ENCODE measurements at regions of chr1 and their contacts with region 1.

Region 1: GRCh38 chr1:113072757-113073478 is at the start of gene LRIG2:
- DNase-seq: peak; percentile 95 to 99 (median 96)
- H3K4me3 ChIP-seq: peak within 1 kb of the TSS; percentile 85 to 95
- H3K4me3 Mint-ChIP-seq: peak within 1 kb of the TSS; percentile 97 to 99 (median 98)
- H3K27ac ChIP-seq: peak within 1 kb of the TSS; percentile 80
- H3K27ac Mint-ChIP-seq: peak within 1 kb of the TSS; percentile 95 to 99 (median 97)
- H3K4me1 ChIP-seq: peaks cover 35% of the 10 kb centered on the region
- H3K4me1 Mint-ChIP-seq: peaks cover 15 to 54% (median 29%) of the 10 kb centered on the region in 4 donors
- H3K27me3 ChIP-seq: no peaks in the 10 kb centered on the region
- H3K27me3 Mint-ChIP-seq: peaks cover 0 to 1% of the 10 kb centered on the region in 2 donors
- total RNA-seq, gene LRIG2: 24.2 to 27.9 TPM

Region 2: GRCh38 chr1:112619520-112620376 is 453.2 kb before region 1 on chr1 and contains the start of gene CAPZA1:
- CTCF ChIA-PET with region 1: no interaction called
- POLR2A ChIA-PET with region 1: interaction called, 5 read pairs
- intact Hi-C with region 1: loop called (anchors 2 kb)
- DNase-seq: peak; percentile 92 to 94 (median 94)
- H3K4me3 ChIP-seq: peak within 1 kb of the TSS; percentile 83 to 98
- H3K4me3 Mint-ChIP-seq: peak within 1 kb of the TSS; percentile 94 to 100 (median 99)
- H3K27ac ChIP-seq: peak within 1 kb of the TSS; percentile 100
- H3K27ac Mint-ChIP-seq: peak within 1 kb of the TSS; percentile 96 to 100 (median 100)
- H3K4me1 ChIP-seq: peaks cover 55% of the 10 kb centered on the region
- H3K4me1 Mint-ChIP-seq: peaks cover 27 to 71% (median 40%) of the 10 kb centered on the region in 4 donors
- H3K27me3 ChIP-seq: no peaks in the 10 kb centered on the region
- H3K27me3 Mint-ChIP-seq: no peaks in the 10 kb centered on the region
- total RNA-seq, gene CAPZA1: 149 to 157 TPM

Region 3: GRCh38 chr1:112882271-112882744 is 190.6 kb before region 1 on chr1:
- CTCF ChIA-PET with region 1: interaction called, 97 read pairs
- POLR2A ChIA-PET with region 1: no interaction called
- intact Hi-C with region 1: loop called (anchors 2 kb)
- DNase-seq: no peak
- H3K4me3 ChIP-seq: no peak overlapping the region
- H3K4me3 Mint-ChIP-seq: no peak overlapping the region
- H3K27ac ChIP-seq: no peak overlapping the region
- H3K27ac Mint-ChIP-seq: no peak overlapping the region
- H3K4me1 ChIP-seq: no peaks in the 10 kb centered on the region
- H3K4me1 Mint-ChIP-seq: no peaks in the 10 kb centered on the region
- H3K27me3 ChIP-seq: no peaks in the 10 kb centered on the region
- H3K27me3 Mint-ChIP-seq: peaks cover 1 to 2% of the 10 kb centered on the region in 2 donors

Region 4: DNA sequence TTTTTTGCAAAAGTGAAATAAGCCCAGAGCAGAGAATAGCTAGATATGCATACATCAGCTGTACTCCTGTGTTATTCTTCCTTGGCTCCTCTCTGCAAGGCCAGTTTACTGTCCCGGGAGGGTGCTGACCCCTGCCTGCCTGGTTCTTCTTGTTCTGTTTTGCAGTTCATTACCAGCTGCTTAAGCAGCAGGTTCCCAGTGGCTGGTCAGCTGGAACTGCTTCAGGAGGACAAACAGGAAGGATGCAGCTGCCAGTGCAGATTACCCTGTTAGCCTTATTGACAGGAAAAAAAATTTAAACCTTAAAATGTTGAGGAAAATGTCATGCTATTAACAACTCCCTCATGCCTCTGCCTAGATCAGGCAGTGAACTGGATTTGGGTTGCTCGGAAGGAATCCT is 15.9 kb before region 1 on chr1:
- CTCF ChIA-PET with region 1: interaction called, 37 read pairs
- POLR2A ChIA-PET with region 1: interaction called, 4 read pairs
- intact Hi-C with region 1: no loop called
- DNase-seq: no peak
- H3K4me3 ChIP-seq: no peak overlapping the region
- H3K4me3 Mint-ChIP-seq: no peak overlapping the region
- H3K27ac ChIP-seq: no peak overlapping the region
- H3K27ac Mint-ChIP-seq: no peak overlapping the region
- H3K4me1 ChIP-seq: no peaks in the 10 kb centered on the region
- H3K4me1 Mint-ChIP-seq: peaks cover 0 to 2% (median under 1%) of the 10 kb centered on the region in 4 donors
- H3K27me3 ChIP-seq: no peaks in the 10 kb centered on the region
- H3K27me3 Mint-ChIP-seq: no peaks in the 10 kb centered on the region

Region 5: DNA sequence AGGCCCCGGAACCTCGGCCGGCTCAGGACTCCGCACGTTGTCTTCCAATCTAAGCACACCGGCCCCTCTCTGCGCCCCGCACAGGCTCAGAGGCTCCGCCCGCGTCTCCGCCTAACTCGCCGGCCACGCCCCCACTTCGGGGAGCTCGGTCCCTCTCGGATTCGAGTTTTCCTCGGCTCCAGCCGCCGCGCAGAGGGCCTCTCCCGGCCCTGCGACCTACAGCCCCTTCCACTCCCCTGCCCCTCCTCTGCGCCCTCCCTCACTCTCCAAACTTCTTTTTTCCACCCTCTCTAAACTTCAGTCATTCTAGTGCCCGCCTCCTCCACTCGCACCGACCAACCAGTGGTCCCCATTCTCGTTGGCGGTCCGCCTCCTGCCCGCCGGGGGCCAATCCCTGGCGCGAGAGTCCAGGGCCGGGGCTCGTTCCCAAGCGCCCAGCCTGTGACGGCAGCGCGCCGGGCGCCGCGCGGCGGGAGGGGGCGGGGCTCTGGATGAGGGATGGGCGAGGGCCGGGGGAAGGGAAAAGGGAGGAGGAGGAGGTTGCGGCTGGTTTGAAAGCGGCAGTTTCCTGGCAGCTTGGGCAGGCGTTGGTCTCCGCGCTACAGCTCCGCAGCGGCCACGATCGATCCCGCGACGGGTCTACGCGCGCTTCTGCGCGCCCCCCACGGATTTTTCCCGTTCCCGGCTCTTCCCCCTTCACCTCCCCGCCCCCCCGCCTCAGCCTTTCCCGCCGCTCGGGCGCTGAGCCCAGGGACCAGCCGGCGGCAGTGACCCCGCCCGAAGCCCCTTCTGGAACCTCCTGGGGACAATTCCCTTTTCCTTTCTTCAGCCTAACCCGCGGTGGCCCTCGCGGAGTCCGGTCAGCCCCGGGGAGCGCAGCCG is 317.3 kb after region 1 on chr1 and contains the start of gene MAGI3:
- CTCF ChIA-PET with region 1: interaction called, 3 read pairs
- POLR2A ChIA-PET with region 1: no interaction called
- intact Hi-C with region 1: loop called (anchors 2 kb)
- DNase-seq: peak; percentile 92 to 94 (median 93)
- H3K4me3 ChIP-seq: peak within 1 kb of the TSS; percentile 44 to 89
- H3K4me3 Mint-ChIP-seq: peak within 1 kb of the TSS; percentile 88 to 98 (median 92)
- H3K27ac ChIP-seq: peak within 1 kb of the TSS; percentile 60
- H3K27ac Mint-ChIP-seq: peak within 1 kb of the TSS; percentile 80 to 95 (median 91)
- H3K4me1 ChIP-seq: peaks cover 30% of the 10 kb centered on the region
- H3K4me1 Mint-ChIP-seq: peaks cover 20 to 36% (median 23%) of the 10 kb centered on the region in 4 donors
- H3K27me3 ChIP-seq: no peaks in the 10 kb centered on the region
- H3K27me3 Mint-ChIP-seq: no peaks in the 10 kb centered on the region
- total RNA-seq, gene MAGI3: 6.5 to 6.7 TPM

Region 6: DNA sequence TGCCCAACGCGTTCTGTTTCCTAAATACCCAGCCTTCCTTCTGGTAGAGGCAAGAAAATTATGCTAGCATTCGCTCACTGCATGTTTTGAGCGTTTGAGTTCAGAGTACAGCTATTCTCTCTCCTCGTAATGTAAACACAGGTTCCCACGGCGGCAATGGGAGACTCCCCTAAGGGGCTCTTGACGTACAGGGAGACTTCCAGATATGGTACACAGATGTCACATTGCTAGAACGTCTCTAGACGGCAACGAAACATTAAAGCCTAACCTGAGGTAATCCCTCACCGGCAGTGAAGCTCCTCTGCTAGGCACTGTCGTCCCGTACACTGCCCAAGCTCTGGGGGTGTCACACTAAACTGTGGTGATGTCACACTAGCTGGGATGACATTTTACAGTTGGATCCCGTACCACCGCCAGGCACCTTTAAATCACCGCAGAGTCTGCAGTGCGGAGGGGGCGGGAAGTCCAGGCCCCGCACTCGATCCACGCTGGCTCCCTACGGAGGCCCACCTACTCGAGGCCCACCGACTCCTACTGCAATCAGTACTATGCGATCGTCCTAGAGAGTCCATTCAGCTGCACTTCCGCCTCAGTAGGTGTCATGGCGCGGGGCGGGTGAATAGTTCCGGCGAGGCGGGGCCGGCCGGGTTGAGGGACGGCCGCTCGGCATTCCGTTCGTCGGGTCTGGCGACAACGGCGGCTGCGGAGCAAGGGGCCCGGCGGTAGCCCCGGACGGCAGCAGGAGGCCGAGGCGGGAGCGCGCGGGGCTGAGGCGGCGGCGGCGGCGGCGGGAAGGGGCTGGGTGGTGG is 856.2 kb after region 1 on chr1 and contains the start of gene HIPK1:
- CTCF ChIA-PET with region 1: interaction called, 3 read pairs
- POLR2A ChIA-PET with region 1: interaction called, 6 read pairs
- intact Hi-C with region 1: loop called (anchors 2 kb)
- DNase-seq: peak; percentile 92 to 94 (median 93)
- H3K4me3 ChIP-seq: peak within 1 kb of the TSS; percentile 79 to 98
- H3K4me3 Mint-ChIP-seq: peak within 1 kb of the TSS; percentile 96 to 99 (median 98)
- H3K27ac ChIP-seq: peak within 1 kb of the TSS; percentile 97
- H3K27ac Mint-ChIP-seq: peak within 1 kb of the TSS; percentile 97 to 100 (median 100)
- H3K4me1 ChIP-seq: peaks cover 42% of the 10 kb centered on the region
- H3K4me1 Mint-ChIP-seq: peaks cover 34 to 59% (median 47%) of the 10 kb centered on the region in 4 donors
- H3K27me3 ChIP-seq: no peaks in the 10 kb centered on the region
- H3K27me3 Mint-ChIP-seq: no peaks in the 10 kb centered on the region
- total RNA-seq, gene HIPK1: 107 to 110 TPM